ENCODE measurements at regions of chr2 and their contacts with region 1.

Region 1: GRCh38 chr2:189096769-189097447 is 82.7 kb downstream of the COL5A2 start:
- DNase-seq: no peak
- H3K4me3 Mint-ChIP-seq: no peak overlapping the region
- H3K27ac Mint-ChIP-seq: no peak overlapping the region
- H3K4me1 Mint-ChIP-seq: no peaks in the 10 kb centered on the region
- H3K27me3 Mint-ChIP-seq: no peaks in the 10 kb centered on the region

Region 2: GRCh38 chr2:188524519-188525113 is 572.3 kb before region 1 on chr2:
- CTCF ChIA-PET with region 1: no interaction called
- intact Hi-C with region 1: loop called (anchors 1 kb)
- DNase-seq: peak; percentile 35
- H3K4me3 Mint-ChIP-seq: no peak overlapping the region
- H3K27ac Mint-ChIP-seq: no peak overlapping the region
- H3K4me1 Mint-ChIP-seq: no peaks in the 10 kb centered on the region
- H3K27me3 Mint-ChIP-seq: peaks cover 2% of the 10 kb centered on the region

Region 3: DNA sequence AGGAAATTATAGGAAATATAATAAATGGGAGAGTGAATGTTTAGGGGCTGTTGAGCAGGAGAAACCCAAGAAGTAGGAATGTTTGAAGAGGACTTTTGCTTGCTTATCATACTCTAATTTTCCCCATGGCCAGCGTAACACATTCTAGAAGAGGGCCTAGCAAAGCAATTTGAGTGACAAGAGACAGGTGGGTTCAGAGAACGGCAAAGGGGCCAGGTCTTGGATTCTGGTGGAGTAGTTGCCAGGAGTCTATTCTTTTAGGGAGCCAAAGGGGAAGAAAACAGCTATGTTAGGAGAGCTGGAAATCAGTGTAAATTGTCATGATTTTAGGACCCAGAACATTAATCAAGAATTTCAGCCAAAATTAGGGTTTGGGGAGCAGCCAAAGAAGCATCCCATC is 13.8 kb before region 1 on chr2:
- CTCF ChIA-PET with region 1: interaction called, 11 read pairs
- intact Hi-C with region 1: no loop called
- DNase-seq: no peak
- H3K4me3 Mint-ChIP-seq: no peak overlapping the region
- H3K27ac Mint-ChIP-seq: no peak overlapping the region
- H3K4me1 Mint-ChIP-seq: no peaks in the 10 kb centered on the region
- H3K27me3 Mint-ChIP-seq: no peaks in the 10 kb centered on the region

Region 4: GRCh38 chr2:189142893-189143759 is 46.2 kb after region 1 on chr2:
- CTCF ChIA-PET with region 1: interaction called, 12 read pairs
- intact Hi-C with region 1: loop called (anchors 2 kb)
- DNase-seq: peak; percentile 68
- H3K4me3 Mint-ChIP-seq: no peak overlapping the region
- H3K27ac Mint-ChIP-seq: no peak overlapping the region
- H3K4me1 Mint-ChIP-seq: peaks cover 3% of the 10 kb centered on the region
- H3K27me3 Mint-ChIP-seq: no peaks in the 10 kb centered on the region

Region 5: DNA sequence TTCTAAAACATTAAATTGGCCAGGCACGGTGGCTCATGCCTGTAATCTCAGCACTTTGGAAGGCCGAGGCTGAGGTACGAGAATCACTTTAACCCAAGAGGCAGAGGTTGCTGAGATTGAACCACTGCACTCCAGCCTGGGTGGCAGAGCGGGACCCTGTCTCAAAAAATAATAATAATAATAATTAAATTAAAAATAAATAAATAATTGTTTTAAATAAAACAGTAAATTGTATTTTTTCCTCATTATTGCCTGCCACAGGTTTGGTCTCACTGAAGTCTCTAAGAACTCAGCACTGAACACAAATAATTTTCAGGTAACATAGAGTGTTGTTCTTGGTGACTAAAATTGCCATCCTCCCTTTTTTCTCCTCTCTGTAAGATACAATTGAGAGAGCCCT is 62.8 kb after region 1 on chr2:
- CTCF ChIA-PET with region 1: interaction called, 11 read pairs
- intact Hi-C with region 1: no loop called
- DNase-seq: no peak
- H3K4me3 Mint-ChIP-seq: no peak overlapping the region
- H3K27ac Mint-ChIP-seq: no peak overlapping the region
- H3K4me1 Mint-ChIP-seq: no peaks in the 10 kb centered on the region
- H3K27me3 Mint-ChIP-seq: no peaks in the 10 kb centered on the region

Region 6: GRCh38 chr2:189309331-189309730 is 212.4 kb after region 1 on chr2:
- CTCF ChIA-PET with region 1: no interaction called
- intact Hi-C with region 1: loop called (anchors 1 kb)
- DNase-seq: no peak
- H3K4me3 Mint-ChIP-seq: no peak overlapping the region
- H3K27ac Mint-ChIP-seq: peak overlapping the region; percentile 50
- H3K4me1 Mint-ChIP-seq: peaks cover 73% of the 10 kb centered on the region
- H3K27me3 Mint-ChIP-seq: no peaks in the 10 kb centered on the region

Region 7: GRCh38 chr2:189347540-189347939 is 250.6 kb after region 1 on chr2:
- CTCF ChIA-PET with region 1: interaction called, 12 read pairs
- intact Hi-C with region 1: loop called (anchors 1 kb)
- DNase-seq: peak; percentile 28
- H3K4me3 Mint-ChIP-seq: no peak overlapping the region
- H3K27ac Mint-ChIP-seq: no peak overlapping the region
- H3K4me1 Mint-ChIP-seq: peaks cover 17% of the 10 kb centered on the region
- H3K27me3 Mint-ChIP-seq: no peaks in the 10 kb centered on the region

Region 8: GRCh38 chr2:190507135-190507534 is 1410.2 kb after region 1 on chr2:
- CTCF ChIA-PET with region 1: no interaction called
- intact Hi-C with region 1: no loop called
- DNase-seq: no peak
- H3K4me3 Mint-ChIP-seq: no peak overlapping the region
- H3K27ac Mint-ChIP-seq: peak overlapping the region; percentile 6
- H3K4me1 Mint-ChIP-seq: peaks cover 9% of the 10 kb centered on the region
- H3K27me3 Mint-ChIP-seq: no peaks in the 10 kb centered on the region